ENCODE measurements at regions of chr6 and their contacts with region 1.

Region 1: GRCh38 chr6:32255199-32256153 is 31.6 kb upstream of the NOTCH4 start:
- DNase-seq: peak; percentile 43
- ATAC-seq: peak; percentile 89
- H3K4me3 Mint-ChIP-seq: peak overlapping the region; percentile 26
- H3K27ac Mint-ChIP-seq: no peak overlapping the region
- H3K4me1 Mint-ChIP-seq: peaks cover 16% of the 10 kb centered on the region
- H3K27me3 Mint-ChIP-seq: peaks cover 23% of the 10 kb centered on the region

Region 2: GRCh38 chr6:32244946-32245398 is 10.5 kb before region 1 on chr6:
- CTCF ChIA-PET with region 1: interaction called, 23 read pairs
- POLR2A ChIA-PET with region 1: no interaction called
- DNase-seq: peak; percentile 75
- ATAC-seq: peak; percentile 78
- H3K4me3 Mint-ChIP-seq: peak overlapping the region; percentile 1
- H3K27ac Mint-ChIP-seq: no peak overlapping the region
- H3K4me1 Mint-ChIP-seq: peaks cover 25% of the 10 kb centered on the region
- H3K27me3 Mint-ChIP-seq: no peaks in the 10 kb centered on the region

Region 3: GRCh38 chr6:32519118-32519909 is 263.8 kb after region 1 on chr6:
- CTCF ChIA-PET with region 1: no interaction called
- POLR2A ChIA-PET with region 1: no interaction called
- DNase-seq: no peak
- ATAC-seq: no peak
- H3K4me3 Mint-ChIP-seq: no peak overlapping the region
- H3K27ac Mint-ChIP-seq: no peak overlapping the region
- H3K4me1 Mint-ChIP-seq: no peaks in the 10 kb centered on the region
- H3K27me3 Mint-ChIP-seq: peaks cover 17% of the 10 kb centered on the region